Endothelial cell of umbilical vein (primary cell): ENCODE measurements at regions of chr12 and their contacts with region 1.

Region 1: GRCh38 chr12:15700595-15700994 is 88.6 kb downstream of the EPS8 start:
- DNase-seq: peak; percentile 93
- H3K4me3 ChIP-seq: no peak overlapping the region
- H3K27ac ChIP-seq: peak overlapping the region; percentile 90
- H3K4me1 ChIP-seq: peaks cover 36% of the 10 kb centered on the region
- H3K27me3 ChIP-seq: no peaks in the 10 kb centered on the region
- CTCF ChIP-seq: no peak
- POLR2A ChIP-seq: peak; percentile 44

Region 2: DNA sequence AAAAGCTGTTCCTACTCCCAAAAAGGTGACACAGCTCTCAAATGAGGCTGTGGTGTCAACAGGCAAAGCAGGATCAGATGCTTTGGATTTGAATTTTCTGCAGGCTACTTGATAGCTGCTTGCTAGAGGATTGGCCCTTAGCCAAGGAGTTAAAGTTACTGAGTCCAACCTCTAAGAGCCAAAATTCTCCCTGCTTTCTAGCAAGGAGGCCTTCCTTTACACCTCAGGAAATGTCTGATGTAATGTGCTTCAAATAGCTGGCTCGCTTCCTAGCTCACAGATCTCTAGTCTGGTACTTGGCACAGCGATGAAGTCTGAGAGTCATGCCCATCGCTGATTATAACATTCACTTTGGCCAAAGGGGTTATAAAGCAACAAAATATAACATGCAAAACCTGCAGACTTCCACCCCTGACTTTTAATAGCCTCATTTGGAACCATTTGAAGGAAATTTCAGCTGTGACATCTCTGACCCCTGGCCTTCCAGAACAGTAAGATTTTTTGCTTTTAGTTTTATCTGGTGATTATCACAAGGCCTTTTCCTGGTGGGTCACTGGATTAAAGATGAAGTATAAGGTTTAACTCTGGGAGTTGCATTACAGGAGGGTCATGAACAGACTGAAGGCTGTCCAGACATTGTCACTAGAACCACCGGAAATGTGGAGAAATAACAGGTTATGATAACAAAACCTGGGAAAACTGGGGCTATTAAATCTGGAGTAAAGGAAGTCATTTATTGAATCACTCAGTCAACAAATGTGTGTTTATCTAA is 101.1 kb before region 1 on chr12:
- CTCF ChIA-PET with region 1: interaction called, 5 read pairs
- POLR2A ChIA-PET with region 1: no interaction called
- dilution Hi-C with region 1: no loop called
- intact Hi-C with region 1: loop called (anchors 1 kb)
- DNase-seq: peak; percentile 87
- H3K4me3 ChIP-seq: no peak overlapping the region
- H3K27ac ChIP-seq: peak overlapping the region; percentile 60
- H3K4me1 ChIP-seq: peaks cover 28% of the 10 kb centered on the region
- H3K27me3 ChIP-seq: peaks cover 0 to 2% of the 10 kb centered on the region in 2 experiments
- CTCF ChIP-seq: no peak
- POLR2A ChIP-seq: no peak

Region 3: GRCh38 chr12:15634010-15634683 is 66.4 kb before region 1 on chr12:
- CTCF ChIA-PET with region 1: no interaction called
- POLR2A ChIA-PET with region 1: no interaction called
- dilution Hi-C with region 1: no loop called
- intact Hi-C with region 1: loop called (anchors 1 kb)
- DNase-seq: peak; percentile 53
- H3K4me3 ChIP-seq: no peak overlapping the region
- H3K27ac ChIP-seq: peak overlapping the region; percentile 23
- H3K4me1 ChIP-seq: peaks cover 70% of the 10 kb centered on the region
- H3K27me3 ChIP-seq: no peaks in the 10 kb centered on the region
- CTCF ChIP-seq: no peak
- POLR2A ChIP-seq: no peak

Region 4: GRCh38 chr12:15728118-15728598 is 27.6 kb after region 1 on chr12:
- CTCF ChIA-PET with region 1: no interaction called
- POLR2A ChIA-PET with region 1: interaction called, 3 read pairs
- dilution Hi-C with region 1: no loop called
- intact Hi-C with region 1: loop called (anchors 2 kb)
- DNase-seq: peak; percentile 85
- H3K4me3 ChIP-seq: no peak overlapping the region
- H3K27ac ChIP-seq: peak overlapping the region; percentile 79
- H3K4me1 ChIP-seq: peaks cover 9% of the 10 kb centered on the region
- H3K27me3 ChIP-seq: no peaks in the 10 kb centered on the region
- CTCF ChIP-seq: no peak
- POLR2A ChIP-seq: no peak

Region 5: GRCh38 chr12:15882118-15882971 is 181.8 kb after region 1 on chr12 and contains the start of gene STRAP:
- CTCF ChIA-PET with region 1: no interaction called
- POLR2A ChIA-PET with region 1: no interaction called
- dilution Hi-C with region 1: no loop called
- intact Hi-C with region 1: loop called (anchors 5 kb)
- DNase-seq: peak; percentile 99
- H3K4me3 ChIP-seq: peak within 1 kb of the TSS; percentile 59 to 100 (median 94)
- H3K27ac ChIP-seq: peak within 1 kb of the TSS; percentile 97
- H3K4me1 ChIP-seq: peaks cover 24% of the 10 kb centered on the region
- H3K27me3 ChIP-seq: no peaks in the 10 kb centered on the region
- CTCF ChIP-seq: no peak
- POLR2A ChIP-seq: peak; percentile 97
- total RNA-seq, gene STRAP: 138 and 144 TPM in 2 replicates

Region 6: GRCh38 chr12:16155940-16156339 is 455.3 kb after region 1 on chr12:
- CTCF ChIA-PET with region 1: no interaction called
- POLR2A ChIA-PET with region 1: no interaction called
- dilution Hi-C with region 1: no loop called
- intact Hi-C with region 1: no loop called
- DNase-seq: no peak
- H3K4me3 ChIP-seq: no peak overlapping the region
- H3K27ac ChIP-seq: no peak overlapping the region
- H3K4me1 ChIP-seq: no peaks in the 10 kb centered on the region
- H3K27me3 ChIP-seq: no peaks in the 10 kb centered on the region
- CTCF ChIP-seq: no peak
- POLR2A ChIP-seq: no peak